ENCODE measurements at regions of chr1 and their contacts with region 1.

Region 1: DNA sequence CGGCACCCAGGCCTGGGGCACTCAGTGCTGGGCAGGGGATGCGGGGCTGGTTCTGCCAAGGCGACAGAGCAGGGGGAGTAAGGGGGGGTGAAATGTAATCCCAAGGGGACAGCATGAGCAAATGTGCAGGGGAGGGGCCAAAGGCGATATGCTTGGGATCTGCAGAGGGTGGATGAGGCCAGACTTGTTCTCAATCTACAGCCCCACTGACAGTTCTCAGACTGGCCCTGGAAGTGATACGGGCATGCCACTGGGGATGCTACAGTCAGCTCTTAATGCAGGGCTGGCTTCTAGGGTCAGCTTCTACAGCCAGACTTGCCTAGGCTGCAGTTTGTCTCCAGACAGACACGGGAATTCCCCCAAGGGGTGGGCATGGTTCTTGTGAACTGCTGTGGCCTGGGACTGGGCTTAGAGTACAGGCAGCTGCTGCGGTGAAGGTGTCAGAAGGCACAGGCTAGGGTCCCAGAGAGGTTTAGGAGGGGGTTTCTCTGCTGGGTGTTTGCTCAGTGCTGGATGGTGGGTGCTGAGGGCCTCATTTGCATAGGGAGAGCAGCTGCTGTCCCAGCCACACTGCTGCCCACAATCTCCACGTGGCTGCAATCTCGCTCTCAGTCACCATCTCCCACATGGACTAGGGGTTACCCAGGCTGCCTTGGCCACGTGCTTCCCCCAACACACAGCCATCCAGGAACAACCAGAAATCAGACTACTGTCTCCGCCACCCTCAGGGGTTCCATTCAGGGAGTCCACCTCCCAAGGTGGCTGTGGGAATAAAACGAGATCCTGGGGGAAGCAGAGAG is 190.1 kb downstream of the HIVEP3 start:
- DNase-seq: peak; percentile 76
- H3K4me3 Mint-ChIP-seq: peak overlapping the region; percentile 50
- H3K27ac Mint-ChIP-seq: peak overlapping the region; percentile 90
- H3K4me1 Mint-ChIP-seq: peaks cover 47% of the 10 kb centered on the region
- H3K27me3 Mint-ChIP-seq: no peaks in the 10 kb centered on the region

Region 2: DNA sequence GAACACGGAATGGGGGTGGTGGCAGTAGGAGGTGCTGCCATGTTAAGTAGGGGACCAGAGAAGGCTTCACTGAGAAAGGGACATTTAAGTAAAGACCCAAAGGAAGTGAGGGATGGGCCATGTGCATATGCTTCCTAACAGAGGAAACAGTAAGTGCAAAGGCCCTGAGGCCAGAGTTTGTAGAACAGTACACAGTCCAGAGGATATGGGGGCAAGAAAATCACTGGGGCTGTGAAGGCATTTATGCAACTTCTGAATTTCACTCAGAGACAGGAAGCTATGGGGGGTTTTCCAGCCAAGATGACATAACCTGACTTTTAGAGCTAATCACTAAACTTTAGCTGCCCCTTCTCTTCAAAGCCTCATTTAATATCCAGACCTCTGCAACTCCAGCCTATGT is 41.6 kb before region 1 on chr1:
- intact Hi-C with region 1: loop called (anchors 2 kb)
- DNase-seq: no peak
- H3K4me3 Mint-ChIP-seq: no peak overlapping the region
- H3K27ac Mint-ChIP-seq: no peak overlapping the region
- H3K4me1 Mint-ChIP-seq: peaks cover 72% of the 10 kb centered on the region
- H3K27me3 Mint-ChIP-seq: no peaks in the 10 kb centered on the region

Region 3: DNA sequence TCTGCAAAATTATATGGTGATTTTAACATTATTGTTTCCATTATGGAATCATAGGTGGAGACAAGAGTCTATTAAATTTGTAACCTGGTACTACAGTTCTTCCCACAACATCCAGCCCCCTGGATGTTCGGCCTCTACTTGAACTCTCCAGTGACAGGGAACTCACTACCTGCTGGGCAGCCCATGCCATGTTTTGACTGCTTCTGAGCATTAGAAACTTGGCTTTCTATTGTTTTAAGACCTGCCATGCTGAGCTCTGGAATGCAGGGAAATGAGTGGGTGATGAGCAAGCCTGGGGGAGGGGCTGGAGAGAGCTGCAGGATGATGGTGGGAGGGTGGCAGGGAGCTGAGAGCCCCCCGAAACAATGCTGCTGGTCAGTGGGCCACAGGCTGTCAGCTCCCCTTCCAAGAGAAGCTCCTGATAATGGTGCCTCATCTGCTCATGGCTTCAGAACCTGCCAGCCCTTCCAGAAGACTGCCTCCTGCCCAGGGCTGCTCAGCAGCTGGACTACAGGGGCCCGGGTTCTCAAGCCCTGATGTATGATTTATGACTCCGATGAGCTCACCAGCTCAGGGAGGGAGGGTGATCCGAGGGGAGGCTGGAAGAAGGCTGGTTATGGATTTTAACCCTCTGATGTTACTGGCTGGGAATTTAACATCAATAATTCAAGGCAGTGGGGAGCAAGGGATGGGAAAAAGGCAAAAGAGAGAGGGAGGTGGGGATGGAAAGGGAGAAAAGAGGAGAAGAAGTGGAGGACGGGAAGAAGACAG is 14.9 kb before region 1 on chr1:
- intact Hi-C with region 1: no loop called
- DNase-seq: no peak
- H3K4me3 Mint-ChIP-seq: no peak overlapping the region
- H3K27ac Mint-ChIP-seq: no peak overlapping the region
- H3K4me1 Mint-ChIP-seq: peaks cover 25% of the 10 kb centered on the region
- H3K27me3 Mint-ChIP-seq: no peaks in the 10 kb centered on the region

Region 4: DNA sequence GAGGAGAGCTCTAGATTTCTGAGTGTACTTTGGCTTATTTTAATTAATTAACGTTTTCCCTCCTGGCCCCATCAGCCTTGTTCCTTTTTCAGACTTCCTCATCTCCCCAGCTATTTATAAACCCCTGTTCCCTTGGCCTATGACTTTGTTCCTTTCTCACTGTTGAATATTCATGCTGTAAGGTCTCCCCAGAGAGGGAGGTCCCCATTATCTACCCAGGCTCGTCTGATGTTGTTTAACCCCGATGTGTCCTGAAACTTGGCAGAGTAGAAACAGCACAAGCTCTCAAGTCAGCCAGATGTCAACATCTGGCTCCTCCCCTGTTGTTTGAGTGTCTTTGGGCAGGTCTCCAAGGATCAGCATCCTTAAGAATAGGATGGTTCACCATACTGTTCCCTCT is 36.5 kb after region 1 on chr1:
- intact Hi-C with region 1: no loop called
- DNase-seq: no peak
- H3K4me3 Mint-ChIP-seq: no peak overlapping the region
- H3K27ac Mint-ChIP-seq: no peak overlapping the region
- H3K4me1 Mint-ChIP-seq: peaks cover 8% of the 10 kb centered on the region
- H3K27me3 Mint-ChIP-seq: no peaks in the 10 kb centered on the region